Breast epithelium (tissue), 4 donors: ENCODE measurements at regions of chr1 and their contacts with region 1.

Region 1: GRCh38 chr1:7663451-7664146 is 107.5 kb upstream of the VAMP3 start:
- DNase-seq: no peak
- H3K4me3 ChIP-seq: no peak overlapping the region
- H3K27ac ChIP-seq: no peak overlapping the region
- H3K4me1 ChIP-seq: no peaks in the 10 kb centered on the region
- H3K27me3 ChIP-seq: no peaks in the 10 kb centered on the region
- CTCF ChIP-seq: no peak
- POLR2A ChIP-seq: no peak

Region 2: GRCh38 chr1:7752512-7753417 is 89.2 kb after region 1 on chr1:
- intact Hi-C with region 1: loop called (anchors 2 kb)
- DNase-seq: peak in 1 of 2 donors; percentile 53
- H3K4me3 ChIP-seq: peak overlapping the region; percentile 21 to 26 (median 25)
- H3K27ac ChIP-seq: no peak overlapping the region
- H3K4me1 ChIP-seq: no peaks in the 10 kb centered on the region
- H3K27me3 ChIP-seq: no peaks in the 10 kb centered on the region
- CTCF ChIP-seq: peak; percentile 62 to 83 (median 77)
- POLR2A ChIP-seq: no peak